Right ventricle myocardium inferior (tissue), 1 donor: ENCODE measurements at regions of chr2 and their contacts with region 1.

Region 1: GRCh38 chr2:161273038-161273760 is 35.0 kb upstream of the PSMD14 start:
- DNase-seq: no peak
- ATAC-seq: no peak

Region 2: GRCh38 chr2:161223139-161223732 is 50.0 kb before region 1 on chr2:
- intact Hi-C with region 1: loop called (anchors 2 kb)
- DNase-seq: no peak
- ATAC-seq: no peak

Region 3: DNA sequence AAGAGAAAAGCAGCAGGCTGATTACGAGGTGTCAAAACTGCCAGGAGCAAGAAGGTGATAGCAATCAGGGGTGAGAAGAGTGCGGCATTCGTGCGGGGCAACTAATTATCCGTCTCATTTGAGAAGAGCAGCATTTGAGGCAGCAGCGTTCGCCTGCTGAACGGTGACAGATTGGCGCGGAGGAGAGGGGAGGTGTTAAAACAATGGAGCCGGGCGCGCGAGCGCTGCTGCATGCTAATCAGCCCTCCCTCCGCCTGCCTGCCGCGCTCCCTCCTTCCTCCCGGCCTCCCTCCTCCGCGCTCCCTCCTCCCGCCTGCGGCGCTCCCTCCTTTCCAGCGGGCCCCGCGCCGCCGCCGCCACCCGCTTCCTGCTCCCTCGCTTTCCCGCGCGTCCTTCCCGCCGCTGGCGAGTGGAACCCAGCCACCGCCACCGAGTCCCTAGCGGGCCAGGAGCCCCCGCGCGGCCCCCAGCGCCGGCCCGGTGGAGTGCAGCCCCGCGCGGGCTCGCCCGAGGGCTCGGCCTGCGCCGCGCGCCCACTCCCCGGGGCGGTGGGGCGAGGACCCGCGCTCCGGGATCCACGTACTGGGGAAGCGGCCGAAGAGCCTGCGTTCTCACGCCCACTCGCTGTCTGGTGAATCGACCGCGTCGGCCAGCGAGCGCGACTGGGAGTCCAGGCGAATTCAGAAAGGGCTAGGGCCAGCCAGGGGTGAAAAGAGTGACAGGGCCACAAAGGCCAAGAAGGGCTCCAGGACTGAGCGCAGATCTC is 34.5 kb before region 1 on chr2:
- intact Hi-C with region 1: loop called (anchors 5 kb)
- DNase-seq: peak; percentile 83
- ATAC-seq: peak; percentile 85